GM10248 (cell line): ENCODE measurements at regions of chr22 and their contacts with region 1.

Region 1: GRCh38 chr22:37199103-37199759 is 11.2 kb upstream of the C1QTNF6 start:
- DNase-seq: peak; percentile 99
- CTCF ChIP-seq: peak; percentile 94

Region 2: GRCh38 chr22:37043828-37044538 is 155.2 kb before region 1 on chr22:
- CTCF ChIA-PET with region 1: interaction called, 34 read pairs
- POLR2A ChIA-PET with region 1: no interaction called
- DNase-seq: peak; percentile 91
- CTCF ChIP-seq: peak; percentile 88

Region 3: GRCh38 chr22:37121887-37122591 is 77.2 kb before region 1 on chr22:
- CTCF ChIA-PET with region 1: interaction called, 20 read pairs
- POLR2A ChIA-PET with region 1: no interaction called
- DNase-seq: peak; percentile 90
- CTCF ChIP-seq: no peak

Region 4: DNA sequence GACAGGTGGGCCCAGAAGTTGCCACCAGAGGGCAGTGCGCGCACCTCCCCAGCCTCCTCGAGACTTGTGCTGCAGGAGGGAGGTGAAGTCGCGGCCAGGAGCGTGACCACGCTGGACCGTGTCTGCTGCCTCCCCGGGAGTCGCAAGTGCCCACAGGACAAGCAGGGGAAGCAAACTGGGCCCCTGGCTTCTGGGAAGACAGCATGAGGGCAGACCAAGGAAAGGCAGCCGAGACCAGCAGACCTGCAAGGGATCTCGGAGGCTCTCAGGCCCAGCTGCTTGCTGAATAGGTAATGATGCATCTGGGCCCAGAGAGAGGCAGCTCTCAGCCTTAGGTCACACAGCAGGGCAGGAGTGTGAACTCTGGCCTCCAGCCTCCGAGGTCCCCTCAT is 32.6 kb before region 1 on chr22:
- CTCF ChIA-PET with region 1: interaction called, 83 read pairs
- POLR2A ChIA-PET with region 1: interaction called, 4 read pairs
- DNase-seq: peak; percentile 88
- CTCF ChIP-seq: peak; percentile 86

Region 5: DNA sequence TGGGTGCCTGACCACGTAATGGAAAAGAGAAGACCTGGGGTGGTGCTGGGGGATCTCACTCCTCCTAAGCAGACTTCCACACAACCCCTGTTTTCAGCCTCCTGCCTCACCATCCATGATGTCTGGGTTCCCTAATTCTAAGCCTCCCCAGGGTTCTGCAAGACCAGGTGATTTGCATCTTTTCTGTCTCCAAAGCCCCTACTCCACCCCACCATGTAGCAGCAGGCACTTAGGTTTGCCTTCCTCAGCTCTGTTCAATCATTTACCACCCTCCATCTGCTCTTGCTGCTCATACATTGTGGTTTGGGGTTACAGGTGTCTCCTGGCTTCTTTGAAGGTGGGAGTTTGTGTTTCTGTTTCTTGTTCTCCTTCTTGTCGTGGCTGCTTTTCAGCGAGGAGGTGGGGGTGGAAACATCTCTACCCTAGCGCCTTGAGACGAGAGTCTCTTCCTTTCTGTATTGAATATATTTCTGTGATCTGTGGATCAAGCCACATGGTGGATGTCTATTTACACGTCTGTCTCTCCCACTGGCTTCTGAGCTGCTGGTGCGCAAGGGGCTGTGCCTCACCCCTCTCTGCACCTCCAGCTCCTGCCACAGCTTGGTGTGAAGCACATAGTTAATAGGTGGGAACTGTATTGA is 19.7 kb after region 1 on chr22:
- CTCF ChIA-PET with region 1: interaction called, 62 read pairs
- POLR2A ChIA-PET with region 1: no interaction called
- DNase-seq: peak; percentile 85
- CTCF ChIP-seq: no peak

Region 6: DNA sequence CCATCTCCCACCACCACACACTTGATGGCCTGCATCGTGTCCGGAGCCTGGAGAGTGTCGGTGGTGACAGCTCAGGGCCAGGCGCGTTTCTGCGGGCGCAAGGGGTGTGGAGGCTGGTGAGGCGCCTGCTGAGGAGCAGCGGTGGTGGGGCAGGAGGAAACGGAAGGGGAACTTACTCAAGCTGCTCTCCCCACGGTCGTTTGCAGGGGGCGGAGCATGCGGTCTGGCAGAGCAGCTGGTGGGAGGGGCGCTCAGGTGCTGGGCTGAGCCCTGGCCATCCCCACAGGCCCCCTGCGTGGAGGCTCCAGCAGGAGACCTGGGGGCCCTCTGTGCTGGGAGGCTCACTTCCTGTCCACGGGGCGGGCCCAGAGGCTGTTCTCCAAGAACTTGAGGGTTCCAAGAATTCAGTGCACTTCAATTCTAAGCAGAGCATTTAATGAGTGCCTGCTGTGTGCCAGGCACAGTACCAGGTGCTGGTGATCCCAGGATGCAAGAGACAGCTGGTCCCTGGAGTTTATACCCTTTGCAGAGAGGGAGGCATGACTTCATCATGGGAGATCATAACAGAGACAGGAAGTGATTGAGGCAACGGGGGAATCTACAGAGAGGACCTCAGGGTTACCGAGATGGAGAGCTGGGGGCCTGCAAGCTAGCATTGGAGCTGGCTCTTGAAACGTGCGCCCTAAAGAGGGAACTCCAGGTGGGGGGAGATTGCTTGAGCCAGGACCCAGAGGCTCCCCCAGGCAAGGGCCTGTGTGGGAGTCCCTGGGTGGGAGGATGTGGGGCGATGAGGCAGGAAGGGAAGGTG is 45.1 kb after region 1 on chr22 and contains the start of gene RAC2:
- CTCF ChIA-PET with region 1: interaction called, 58 read pairs
- POLR2A ChIA-PET with region 1: no interaction called
- DNase-seq: peak; percentile 88
- CTCF ChIP-seq: no peak

Region 7: DNA sequence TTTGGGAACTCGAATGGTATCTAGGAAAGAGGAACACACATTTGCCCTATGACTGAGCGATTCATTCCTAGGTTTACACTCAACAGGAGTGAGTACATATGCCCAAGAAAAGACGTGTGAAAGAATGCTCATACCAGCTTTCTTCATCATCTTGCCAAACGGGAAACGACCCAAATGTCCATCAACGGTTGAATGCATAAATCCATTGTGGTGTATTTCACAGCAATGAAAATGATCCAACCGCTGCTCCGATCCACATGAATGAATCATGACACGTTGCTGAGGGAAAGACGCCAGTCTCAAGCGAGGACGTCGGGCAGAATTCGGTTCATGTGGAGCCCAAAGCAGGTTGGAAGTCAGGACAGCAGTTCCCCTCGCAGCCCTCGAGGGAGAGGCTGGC is 154.6 kb after region 1 on chr22:
- CTCF ChIA-PET with region 1: no interaction called
- POLR2A ChIA-PET with region 1: no interaction called
- DNase-seq: no peak
- CTCF ChIP-seq: no peak

Region 8: DNA sequence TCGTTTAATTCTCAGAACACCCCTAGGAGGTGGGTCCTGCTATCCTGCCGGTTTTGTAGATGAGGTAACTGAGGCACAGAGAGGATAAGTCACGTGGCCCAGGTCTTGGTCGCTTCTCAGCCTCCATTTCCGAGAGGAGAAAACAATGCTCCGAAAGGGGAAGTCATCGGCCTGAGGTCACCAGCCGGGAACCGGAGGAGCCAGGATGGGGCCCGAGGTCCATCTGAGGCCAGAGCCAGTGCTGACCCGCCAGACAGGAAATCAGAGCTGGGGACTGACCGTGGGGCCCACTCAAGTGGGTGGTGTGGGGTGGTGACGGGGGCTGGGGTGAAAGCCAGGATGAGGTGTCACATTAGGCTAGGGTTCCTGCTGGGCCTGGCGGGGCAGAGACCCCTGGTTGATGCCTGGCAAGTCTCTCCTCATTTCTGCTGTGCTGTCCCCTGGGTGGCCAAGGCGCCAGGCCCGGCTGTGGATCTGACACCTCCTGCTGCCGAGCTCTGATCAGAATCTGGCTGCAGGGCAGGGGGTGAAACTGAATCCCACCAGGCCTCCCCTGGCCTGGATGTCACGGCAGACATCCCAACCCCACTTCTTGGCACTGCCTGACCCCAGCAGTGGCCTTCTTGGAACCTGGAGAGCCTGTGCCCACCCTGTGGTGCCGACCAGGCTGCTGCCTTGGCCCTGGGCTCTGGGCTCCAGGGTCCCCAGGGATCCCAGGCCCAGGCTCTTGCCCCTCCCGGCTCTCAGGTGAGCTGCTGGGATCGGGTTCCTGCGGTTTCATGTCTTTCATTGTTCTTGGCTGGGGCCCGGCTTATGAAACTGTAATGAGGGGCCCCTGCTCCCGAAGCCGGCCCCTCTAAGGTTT is 509.6 kb after region 1 on chr22:
- CTCF ChIA-PET with region 1: no interaction called
- POLR2A ChIA-PET with region 1: no interaction called
- DNase-seq: no peak
- CTCF ChIP-seq: no peak